MCF 10A (cell line): ENCODE measurements at regions of chr2 and their contacts with region 1.

Region 1: GRCh38 chr2:150528861-150529801 is 41.7 kb upstream of the RND3 start:
- DNase-seq: peak; percentile 73
- H3K4me3 Mint-ChIP-seq: peak overlapping the region; percentile 41
- H3K27ac Mint-ChIP-seq: peak overlapping the region; percentile 76
- H3K4me1 Mint-ChIP-seq: peaks cover 27% of the 10 kb centered on the region
- H3K27me3 Mint-ChIP-seq: no peaks in the 10 kb centered on the region
- CTCF ChIP-seq: no peak

Region 2: GRCh38 chr2:150495993-150496627 is 33.0 kb before region 1 on chr2:
- CTCF ChIA-PET with region 1: no interaction called
- POLR2A ChIA-PET with region 1: interaction called, 7 read pairs
- intact Hi-C with region 1: loop called (anchors 2 kb)
- DNase-seq: peak; percentile 62
- H3K4me3 Mint-ChIP-seq: peak overlapping the region; percentile 24
- H3K27ac Mint-ChIP-seq: peak overlapping the region; percentile 68
- H3K4me1 Mint-ChIP-seq: peaks cover 18% of the 10 kb centered on the region
- H3K27me3 Mint-ChIP-seq: no peaks in the 10 kb centered on the region
- CTCF ChIP-seq: no peak

Region 3: GRCh38 chr2:150517951-150518680 is 11.0 kb before region 1 on chr2:
- CTCF ChIA-PET with region 1: interaction called, 4 read pairs
- POLR2A ChIA-PET with region 1: interaction called, 11 read pairs
- intact Hi-C with region 1: no loop called
- DNase-seq: no peak
- H3K4me3 Mint-ChIP-seq: no peak overlapping the region
- H3K27ac Mint-ChIP-seq: peak overlapping the region; percentile 61
- H3K4me1 Mint-ChIP-seq: peaks cover 20% of the 10 kb centered on the region
- H3K27me3 Mint-ChIP-seq: no peaks in the 10 kb centered on the region
- CTCF ChIP-seq: no peak

Region 4: DNA sequence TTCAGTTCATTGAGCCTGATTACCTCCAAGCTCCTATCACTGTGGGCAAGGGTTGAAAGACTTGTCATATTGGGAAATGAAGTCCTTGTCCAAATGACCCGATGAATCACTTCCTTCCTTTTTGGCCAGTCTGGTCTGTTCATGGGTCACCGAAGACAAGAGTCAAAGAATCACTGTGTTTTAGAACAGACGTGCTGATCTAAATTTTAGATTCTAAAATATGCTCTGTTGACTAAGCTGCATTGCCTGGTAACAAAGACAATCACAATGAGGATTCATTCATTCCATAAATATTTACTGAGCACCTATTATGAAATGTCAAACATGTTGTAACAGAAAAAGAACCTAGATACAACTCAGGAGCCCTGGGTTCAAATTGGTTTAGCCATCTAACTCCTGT is 57.7 kb after region 1 on chr2:
- CTCF ChIA-PET with region 1: no interaction called
- POLR2A ChIA-PET with region 1: no interaction called
- intact Hi-C with region 1: loop called (anchors 10 kb)
- DNase-seq: peak; percentile 67
- H3K4me3 Mint-ChIP-seq: no peak overlapping the region
- H3K27ac Mint-ChIP-seq: peak overlapping the region; percentile 57
- H3K4me1 Mint-ChIP-seq: no peaks in the 10 kb centered on the region
- H3K27me3 Mint-ChIP-seq: no peaks in the 10 kb centered on the region
- CTCF ChIP-seq: no peak